H1 (cell line): ENCODE measurements at regions of chr7 and their contacts with region 1.

Region 1: GRCh38 chr7:139016931-139017511 is 18.8 kb downstream of the ZC3HAV1L start:
- DNase-seq: peak in 1 of 2 experiments; percentile 67
- H3K4me3 ChIP-seq: no peak overlapping the region
- H3K27ac ChIP-seq: no peak overlapping the region
- H3K4me1 ChIP-seq: 0 out of 7 replicates have a peak, but pooled peaks cover 0 to 5% (median 0%) of the 10 kb centered on the region in 4 experiments
- H3K27me3 ChIP-seq: no peaks in the 10 kb centered on the region
- CTCF ChIP-seq: peak; percentile 35 to 75 (median 70)
- EP300 ChIP-seq: no peak
- POLR2A ChIP-seq: no peak
- RAD21 ChIP-seq: peak; percentile 75 to 78

Region 2: DNA sequence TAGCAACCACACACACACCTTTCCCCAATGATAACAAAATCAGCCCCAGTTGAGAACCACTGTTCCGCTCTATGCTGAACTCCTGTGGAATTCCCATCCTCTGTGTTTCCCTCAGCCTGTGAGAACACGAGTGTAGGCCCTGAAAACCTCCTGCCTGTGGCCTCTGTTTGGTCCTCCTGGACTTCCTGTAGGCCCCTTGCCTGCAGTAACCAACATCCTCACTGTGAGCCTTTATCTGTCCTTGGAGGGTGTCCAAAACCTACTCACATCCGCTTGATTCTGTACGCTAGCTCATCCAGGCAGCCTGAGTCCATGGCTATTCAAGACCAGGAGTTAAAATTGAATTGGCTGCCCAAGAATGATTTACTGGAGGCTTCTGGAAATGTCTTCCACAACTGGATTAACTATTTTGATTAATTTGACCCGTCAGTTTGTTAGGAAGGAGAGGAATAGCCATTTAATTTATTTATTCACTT is 791.0 kb before region 1 on chr7:
- CTCF ChIA-PET with region 1: no interaction called
- POLR2A ChIA-PET with region 1: no interaction called
- DNase-seq: no peak
- H3K4me3 ChIP-seq: no peak overlapping the region
- H3K27ac ChIP-seq: no peak overlapping the region
- H3K4me1 ChIP-seq: peaks cover 0 to 3% (median 0%) of the 10 kb centered on the region in 4 experiments; a peak in 1 of 7 replicates
- H3K27me3 ChIP-seq: no peaks in the 10 kb centered on the region
- CTCF ChIP-seq: no peak
- EP300 ChIP-seq: no peak
- POLR2A ChIP-seq: no peak
- RAD21 ChIP-seq: no peak

Region 3: DNA sequence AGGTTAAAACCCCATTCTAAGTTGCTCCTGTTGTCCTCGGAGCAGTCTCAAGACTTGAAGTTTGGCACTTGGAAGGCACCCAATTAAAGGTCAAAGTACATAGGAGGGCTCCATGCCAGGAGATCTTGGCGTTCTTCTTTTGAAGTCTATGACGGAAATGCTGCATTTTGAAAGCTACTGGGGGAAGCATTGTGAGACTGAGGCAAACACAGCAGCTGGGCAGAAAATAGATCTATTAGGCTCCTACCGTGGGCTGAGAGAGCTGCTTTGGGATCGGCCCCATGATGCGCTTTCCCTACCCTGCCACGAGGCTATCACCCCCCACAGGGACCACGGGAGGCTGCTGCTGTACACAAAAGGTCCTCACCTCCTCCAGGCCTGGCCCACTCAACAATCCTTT is 55.9 kb before region 1 on chr7:
- CTCF ChIA-PET with region 1: no interaction called
- POLR2A ChIA-PET with region 1: no interaction called
- DNase-seq: no peak
- H3K4me3 ChIP-seq: no peak overlapping the region
- H3K27ac ChIP-seq: no peak overlapping the region
- H3K4me1 ChIP-seq: peaks cover 1 to 11% (median 8%) of the 10 kb centered on the region in 4 experiments
- H3K27me3 ChIP-seq: no peaks in the 10 kb centered on the region
- CTCF ChIP-seq: peak in 1 of 3 experiments; percentile 6; a peak in 1 of 4 replicates
- EP300 ChIP-seq: no peak
- POLR2A ChIP-seq: no peak
- RAD21 ChIP-seq: no peak

Region 4: GRCh38 chr7:138999414-138999813 is 17.6 kb before region 1 on chr7:
- CTCF ChIA-PET with region 1: interaction called, 10 read pairs
- POLR2A ChIA-PET with region 1: no interaction called
- DNase-seq: no peak
- H3K4me3 ChIP-seq: no peak overlapping the region
- H3K27ac ChIP-seq: no peak overlapping the region
- H3K4me1 ChIP-seq: no peaks in the 10 kb centered on the region
- H3K27me3 ChIP-seq: no peaks in the 10 kb centered on the region
- CTCF ChIP-seq: no peak
- EP300 ChIP-seq: no peak
- POLR2A ChIP-seq: no peak
- RAD21 ChIP-seq: no peak

Region 5: DNA sequence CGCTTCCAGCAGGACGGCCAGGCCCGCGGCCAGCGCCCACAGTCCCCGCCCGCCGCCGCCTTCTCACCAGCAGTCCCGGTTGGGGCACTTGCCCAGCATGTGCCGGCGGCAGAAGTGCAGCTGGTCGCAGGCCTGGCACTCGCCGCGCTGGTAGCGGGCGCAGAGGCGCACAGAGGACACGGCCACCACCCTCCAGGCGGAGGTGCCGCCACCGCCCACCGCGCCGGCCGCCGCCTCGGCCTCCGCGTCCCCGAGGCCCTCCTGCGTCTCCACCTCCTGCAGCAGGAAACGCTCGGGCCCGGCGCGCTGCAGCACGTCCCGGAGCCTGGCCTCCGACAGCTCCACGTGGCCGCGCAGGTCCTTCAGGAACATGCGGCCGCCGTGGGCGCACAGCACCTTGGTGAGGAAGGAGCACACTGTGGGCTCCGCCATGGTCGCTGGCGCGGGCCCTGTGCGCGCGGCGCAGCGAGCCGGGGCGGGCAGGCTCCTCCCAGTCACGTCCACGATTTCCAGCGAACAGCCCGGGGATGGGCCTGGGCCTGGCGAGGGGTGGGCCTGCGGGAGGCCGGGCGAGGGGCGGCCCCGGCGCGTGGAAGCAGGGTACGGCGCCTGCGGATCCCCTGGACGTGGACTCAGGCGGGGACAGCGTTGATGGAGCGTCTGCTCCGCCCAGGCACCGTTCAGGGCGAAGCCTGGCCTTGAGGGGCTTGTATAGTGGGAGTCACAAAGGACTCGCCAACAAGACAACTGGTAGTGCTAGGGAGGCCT is 18.7 kb after region 1 on chr7 and contains the start of gene ZC3HAV1L:
- CTCF ChIA-PET with region 1: interaction called, 10 read pairs
- POLR2A ChIA-PET with region 1: interaction called, 7 read pairs
- DNase-seq: peak in 1 of 2 experiments; percentile 80
- H3K4me3 ChIP-seq: peak within 1 kb of the TSS; percentile 66 to 77 (median 74)
- H3K27ac ChIP-seq: 0 out of 2 replicates have a peak within 1 kb of the TSS, but pooled peaks have one; percentile 30
- H3K4me1 ChIP-seq: peaks cover 5 to 9% (median 7%) of the 10 kb centered on the region in 4 experiments; a peak in 5 of 7 replicates
- H3K27me3 ChIP-seq: peaks cover 0 to 2% (median 0%) of the 10 kb centered on the region in 4 experiments; a peak in 2 of 7 replicates
- CTCF ChIP-seq: no peak
- EP300 ChIP-seq: no peak
- POLR2A ChIP-seq: peak; percentile 28 to 35; a peak in 2 of 3 replicates
- RAD21 ChIP-seq: no peak
- total RNA-seq, gene ZC3HAV1L: 7.0 and 7.1 TPM in 2 replicates

Region 6: DNA sequence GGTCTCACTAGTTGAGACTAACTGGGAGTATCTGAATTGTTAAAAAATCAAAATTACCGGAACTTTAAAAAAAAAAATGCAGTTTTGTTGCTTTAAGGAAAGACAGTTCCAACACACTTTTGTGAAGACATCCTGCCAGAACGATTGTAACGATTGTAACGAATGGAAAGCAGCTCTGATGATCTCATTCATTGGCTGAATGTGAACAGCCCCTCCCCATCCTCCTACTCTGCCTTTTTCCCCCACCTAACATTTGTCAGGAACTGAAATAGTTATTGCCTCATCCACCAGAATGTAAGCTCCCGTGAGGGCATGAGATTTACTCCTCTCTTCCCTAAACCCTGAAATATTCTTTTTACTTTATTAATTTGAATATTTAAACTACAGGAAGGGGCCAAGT is 41.9 kb after region 1 on chr7:
- CTCF ChIA-PET with region 1: interaction called, 12 read pairs
- POLR2A ChIA-PET with region 1: interaction called, 3 read pairs
- DNase-seq: no peak
- H3K4me3 ChIP-seq: no peak overlapping the region
- H3K27ac ChIP-seq: no peak overlapping the region
- H3K4me1 ChIP-seq: no peaks in the 10 kb centered on the region
- H3K27me3 ChIP-seq: no peaks in the 10 kb centered on the region
- CTCF ChIP-seq: no peak
- EP300 ChIP-seq: no peak
- POLR2A ChIP-seq: no peak
- RAD21 ChIP-seq: no peak